ENCODE measurements at regions of chr1 and their contacts with region 1.

Region 1: GRCh38 chr1:61641578-61642336 is 83.2 kb downstream of the TM2D1 start:
- DNase-seq: peak; percentile 35
- H3K4me3 Mint-ChIP-seq: peak overlapping the region; percentile 60
- H3K27ac Mint-ChIP-seq: no peak overlapping the region
- H3K4me1 Mint-ChIP-seq: peaks cover 11% of the 10 kb centered on the region
- H3K27me3 Mint-ChIP-seq: peaks cover 11% of the 10 kb centered on the region

Region 2: DNA sequence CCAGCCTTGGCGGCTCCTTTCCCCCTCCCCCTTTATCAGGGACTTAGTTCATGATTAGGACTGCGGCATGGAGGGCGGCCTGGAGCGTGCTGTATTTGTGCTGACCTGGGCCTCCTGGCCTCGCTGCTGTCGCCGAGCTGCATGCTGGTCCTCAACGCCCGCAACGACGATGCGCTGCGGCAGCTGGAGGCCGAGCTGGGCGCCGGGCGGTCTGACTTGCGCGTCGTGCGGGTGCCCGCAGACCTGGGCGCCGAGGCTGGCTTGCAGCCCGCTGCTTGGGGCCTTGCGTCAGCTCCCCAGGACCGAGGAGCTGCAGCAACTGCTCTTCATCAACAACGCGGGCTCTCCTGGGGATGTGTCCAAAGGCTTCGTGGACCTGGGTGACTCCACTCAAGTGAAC is 12.3 kb after region 1 on chr1:
- intact Hi-C with region 1: loop called (anchors 1 kb)
- DNase-seq: no peak
- H3K4me3 Mint-ChIP-seq: no peak overlapping the region
- H3K27ac Mint-ChIP-seq: no peak overlapping the region
- H3K4me1 Mint-ChIP-seq: no peaks in the 10 kb centered on the region
- H3K27me3 Mint-ChIP-seq: no peaks in the 10 kb centered on the region

Region 3: GRCh38 chr1:61782771-61783170 is 141.0 kb after region 1 on chr1:
- intact Hi-C with region 1: no loop called
- DNase-seq: peak; percentile 70
- H3K4me3 Mint-ChIP-seq: no peak overlapping the region
- H3K27ac Mint-ChIP-seq: peak overlapping the region; percentile 78
- H3K4me1 Mint-ChIP-seq: peaks cover 57% of the 10 kb centered on the region
- H3K27me3 Mint-ChIP-seq: no peaks in the 10 kb centered on the region